ENCODE measurements at regions of chr1 and their contacts with region 1.

Region 1: GRCh38 chr1:159370855-159371254 is 61.1 kb upstream of the OR10J4 start:
- DNase-seq: no peak
- ATAC-seq: no peak
- H3K4me3 ChIP-seq: no peak overlapping the region
- H3K27ac ChIP-seq: no peak overlapping the region
- H3K4me1 ChIP-seq: no peaks in the 10 kb centered on the region
- H3K27me3 ChIP-seq: no peaks in the 10 kb centered on the region

Region 2: DNA sequence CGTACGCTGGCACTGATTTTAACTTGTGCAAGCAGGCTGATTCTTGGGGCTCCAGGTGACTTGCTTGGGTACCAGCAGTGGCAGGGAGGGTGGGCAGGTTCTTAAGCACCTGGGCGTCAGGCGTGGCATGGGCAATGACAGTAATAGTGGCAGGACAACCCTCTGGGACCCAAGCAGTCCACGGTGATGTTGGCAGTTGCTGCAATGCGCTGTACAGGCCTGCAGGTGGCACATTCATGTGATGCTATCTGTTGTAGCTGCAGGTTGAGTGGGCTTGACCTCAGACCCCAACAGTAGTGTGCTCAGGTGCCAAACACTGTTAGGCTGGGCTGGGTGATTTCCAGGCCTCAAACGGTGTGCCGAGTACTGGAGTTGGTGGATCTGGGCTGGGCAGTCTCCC is 51.0 kb after region 1 on chr1:
- intact Hi-C with region 1: no loop called
- DNase-seq: peak in 1 of 3 donors; percentile 23
- ATAC-seq: no peak
- H3K4me3 ChIP-seq: no peak overlapping the region
- H3K27ac ChIP-seq: no peak overlapping the region
- H3K4me1 ChIP-seq: no peaks in the 10 kb centered on the region
- H3K27me3 ChIP-seq: no peaks in the 10 kb centered on the region

Region 3: GRCh38 chr1:159431904-159432303 is 61.0 kb after region 1 on chr1 and contains the start of gene OR10J4:
- intact Hi-C with region 1: no loop called
- DNase-seq: no peak
- ATAC-seq: no peak
- H3K4me3 ChIP-seq: no peak within 1 kb of the TSS
- H3K27ac ChIP-seq: no peak within 1 kb of the TSS
- H3K4me1 ChIP-seq: no peaks in the 10 kb centered on the region
- H3K27me3 ChIP-seq: no peaks in the 10 kb centered on the region
- total RNA-seq, gene OR10J4: not detected

Region 4: DNA sequence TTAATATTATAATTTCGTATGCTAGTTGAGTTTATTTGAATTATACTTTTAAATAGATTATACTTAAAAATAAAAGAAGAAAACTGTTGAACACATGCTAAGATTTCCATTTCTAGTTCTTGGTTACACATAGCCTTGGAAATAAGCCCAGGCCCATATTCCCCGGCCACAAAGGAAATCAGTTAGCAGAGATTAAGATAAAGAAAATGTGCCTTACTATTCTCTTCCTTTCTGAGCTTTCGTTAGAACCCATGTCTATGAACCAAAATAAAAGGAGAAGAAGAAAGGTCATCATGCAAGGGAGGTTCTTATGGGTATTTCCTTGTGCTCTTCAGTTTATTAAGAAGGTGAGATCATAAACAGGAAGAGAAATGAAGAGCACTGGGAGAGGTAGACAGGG is 375.8 kb after region 1 on chr1:
- intact Hi-C with region 1: loop called in 1 of 4 experiments (anchors 10 kb)
- DNase-seq: no peak
- ATAC-seq: no peak
- H3K4me3 ChIP-seq: no peak overlapping the region
- H3K27ac ChIP-seq: no peak overlapping the region
- H3K4me1 ChIP-seq: no peaks in the 10 kb centered on the region
- H3K27me3 ChIP-seq: no peaks in the 10 kb centered on the region